Left ventricle myocardium inferior (tissue), 1 donor: ENCODE measurements at regions of chr12 and their contacts with region 1.

Region 1: GRCh38 chr12:7638760-7639555 is 26.8 kb downstream of the APOBEC1 start:
- DNase-seq: peak; percentile 33
- H3K4me3 ChIP-seq: peak overlapping the region; percentile 59
- H3K27ac ChIP-seq: no peak overlapping the region
- H3K4me1 ChIP-seq: peaks cover 3% of the 10 kb centered on the region
- H3K27me3 ChIP-seq: peaks cover 87% of the 10 kb centered on the region
- CTCF ChIP-seq: peak; percentile 85

Region 2: DNA sequence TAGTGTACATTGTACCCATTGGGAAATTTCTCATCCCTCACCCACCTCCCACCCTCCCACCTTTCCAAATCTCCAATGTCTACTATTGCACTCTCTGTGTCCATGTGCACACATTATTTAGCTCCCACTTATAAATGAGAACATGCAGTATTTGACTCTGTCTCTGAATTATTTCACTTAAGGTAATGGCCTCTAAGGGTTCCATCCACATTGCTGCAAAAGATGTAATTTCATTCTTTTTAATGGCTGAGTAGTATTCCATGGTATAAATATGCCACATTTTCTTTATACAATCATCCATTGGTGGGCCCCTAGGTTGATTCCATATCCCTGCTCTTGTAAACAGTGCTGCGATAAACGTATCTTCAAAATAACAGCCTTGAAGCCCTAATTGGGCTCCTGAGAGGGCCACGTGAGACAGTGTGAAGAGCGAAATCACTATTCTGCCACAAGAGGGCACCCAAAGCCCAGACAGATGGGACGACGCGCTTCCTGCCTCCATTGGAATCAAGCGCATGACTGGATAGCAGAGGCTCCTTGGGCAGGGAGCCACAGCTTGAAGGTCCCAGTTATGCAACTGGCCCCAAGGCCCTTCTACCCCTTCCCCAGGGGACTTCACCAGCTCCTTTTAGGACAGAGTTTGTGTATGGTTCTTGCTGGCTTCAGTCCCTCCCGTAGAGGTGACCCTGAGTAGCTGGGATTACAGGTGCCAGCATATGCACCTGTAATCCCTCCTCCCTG is 1215.5 kb before region 1 on chr12:
- intact Hi-C with region 1: no loop called
- DNase-seq: peak; percentile 79
- H3K4me3 ChIP-seq: no peak overlapping the region
- H3K27ac ChIP-seq: peak overlapping the region; percentile 33
- H3K4me1 ChIP-seq: peaks cover 9% of the 10 kb centered on the region
- H3K27me3 ChIP-seq: peaks cover 4% of the 10 kb centered on the region
- CTCF ChIP-seq: peak; percentile 93

Region 3: GRCh38 chr12:7219599-7220243 is 419.2 kb before region 1 on chr12:
- intact Hi-C with region 1: loop called (anchors 5 kb)
- DNase-seq: peak; percentile 44
- H3K4me3 ChIP-seq: no peak overlapping the region
- H3K27ac ChIP-seq: no peak overlapping the region
- H3K4me1 ChIP-seq: no peaks in the 10 kb centered on the region
- H3K27me3 ChIP-seq: no peaks in the 10 kb centered on the region
- CTCF ChIP-seq: peak; percentile 87

Region 4: GRCh38 chr12:7460375-7461259 is 178.3 kb before region 1 on chr12:
- intact Hi-C with region 1: loop called (anchors 10 kb)
- DNase-seq: peak; percentile 29
- H3K4me3 ChIP-seq: no peak overlapping the region
- H3K27ac ChIP-seq: no peak overlapping the region
- H3K4me1 ChIP-seq: no peaks in the 10 kb centered on the region
- H3K27me3 ChIP-seq: peaks cover 13% of the 10 kb centered on the region
- CTCF ChIP-seq: peak; percentile 85